Activated CD4-positive, alpha-beta memory T cell treated with anti-CD3 and anti-CD28 coated beads for 36 hours (primary cell): ENCODE measurements at regions of chr2 and their contacts with region 1.

Region 1: GRCh38 chr2:218568190-218569037 is at the starts of genes CNOT9 and USP37:
- DNase-seq: peak; percentile 100
- H3K4me3 Mint-ChIP-seq: peak within 1 kb of the TSS; percentile 96
- H3K27ac Mint-ChIP-seq: peak within 1 kb of the TSS; percentile 100
- H3K4me1 Mint-ChIP-seq: peaks cover 54% of the 10 kb centered on the region
- H3K27me3 Mint-ChIP-seq: no peaks in the 10 kb centered on the region
- total RNA-seq, gene CNOT9: 84.7 to 87.3 TPM
- total RNA-seq, gene USP37: 27.2 to 28.7 TPM

Region 2: DNA sequence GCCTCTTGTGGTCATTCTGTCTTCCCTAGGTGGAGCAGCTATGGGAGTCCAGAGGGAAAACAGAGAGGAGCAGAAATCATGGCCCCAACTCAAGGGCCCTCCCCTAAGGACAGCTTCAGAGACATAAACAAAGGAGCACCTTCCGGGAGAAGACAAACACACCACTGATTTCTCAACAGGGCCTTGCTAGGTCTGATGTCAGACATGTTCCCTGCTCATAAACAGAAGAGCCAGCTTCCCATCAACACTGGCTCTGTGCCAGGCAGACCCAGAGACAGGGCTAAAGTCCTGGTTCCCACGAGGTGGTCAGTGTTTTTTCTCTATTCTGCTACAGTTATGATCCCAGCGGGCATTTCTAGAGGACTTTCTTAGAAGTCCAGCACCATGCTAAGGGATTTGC is 423.3 kb before region 1 on chr2:
- CTCF ChIA-PET with region 1: no interaction called
- POLR2A ChIA-PET with region 1: no interaction called
- intact Hi-C with region 1: no loop called
- DNase-seq: no peak
- H3K4me3 Mint-ChIP-seq: no peak overlapping the region
- H3K27ac Mint-ChIP-seq: no peak overlapping the region
- H3K4me1 Mint-ChIP-seq: no peaks in the 10 kb centered on the region
- H3K27me3 Mint-ChIP-seq: peaks cover 2% of the 10 kb centered on the region

Region 3: DNA sequence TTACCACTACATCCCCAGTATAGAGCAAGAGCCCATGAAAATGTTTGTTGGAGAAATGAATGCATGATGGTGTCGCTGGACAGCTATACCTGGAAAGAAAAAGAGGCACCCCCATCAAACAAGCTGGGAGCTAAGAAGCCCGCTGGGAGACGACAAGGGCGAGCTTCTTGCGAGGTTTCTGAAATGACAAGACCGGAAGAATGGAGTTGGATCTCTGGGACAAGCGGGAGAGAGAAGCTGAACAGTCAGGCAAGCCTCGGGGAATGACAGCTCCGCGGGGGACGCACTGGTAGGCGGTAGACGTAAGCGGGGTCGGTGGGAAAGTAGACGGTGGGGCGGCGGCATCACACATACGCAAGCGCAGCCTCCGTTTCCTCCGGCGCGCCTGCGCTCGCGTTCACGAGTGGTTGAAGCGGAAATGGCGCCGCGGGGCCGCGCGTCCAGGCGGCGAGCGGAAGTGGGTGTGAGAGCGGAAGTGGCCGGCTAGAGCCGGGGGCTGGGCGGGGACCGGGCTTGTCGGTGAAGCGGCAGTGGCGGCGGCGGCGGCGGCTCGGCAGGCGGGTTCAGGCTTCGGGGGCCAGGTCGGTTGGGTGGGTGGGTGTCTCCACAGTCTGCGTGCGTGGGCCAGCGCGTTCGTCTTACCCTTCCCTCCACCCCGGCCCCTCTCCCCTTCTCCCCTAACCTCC is 351.6 kb before region 1 on chr2 and contains the start of gene ARPC2:
- CTCF ChIA-PET with region 1: no interaction called
- POLR2A ChIA-PET with region 1: no interaction called
- intact Hi-C with region 1: loop called (anchors 1 kb)
- DNase-seq: peak; percentile 97
- H3K4me3 Mint-ChIP-seq: peak within 1 kb of the TSS; percentile 83
- H3K27ac Mint-ChIP-seq: peak within 1 kb of the TSS; percentile 91
- H3K4me1 Mint-ChIP-seq: peaks cover 34% of the 10 kb centered on the region
- H3K27me3 Mint-ChIP-seq: no peaks in the 10 kb centered on the region
- total RNA-seq, gene ARPC2: 564 to 570 TPM

Region 4: GRCh38 chr2:218286570-218287459 is 281.6 kb before region 1 on chr2:
- CTCF ChIA-PET with region 1: no interaction called
- POLR2A ChIA-PET with region 1: no interaction called
- intact Hi-C with region 1: loop called (anchors 2 kb)
- DNase-seq: peak; percentile 92
- H3K4me3 Mint-ChIP-seq: peak overlapping the region; percentile 82
- H3K27ac Mint-ChIP-seq: peak overlapping the region; percentile 98
- H3K4me1 Mint-ChIP-seq: peaks cover 81% of the 10 kb centered on the region
- H3K27me3 Mint-ChIP-seq: no peaks in the 10 kb centered on the region

Region 5: DNA sequence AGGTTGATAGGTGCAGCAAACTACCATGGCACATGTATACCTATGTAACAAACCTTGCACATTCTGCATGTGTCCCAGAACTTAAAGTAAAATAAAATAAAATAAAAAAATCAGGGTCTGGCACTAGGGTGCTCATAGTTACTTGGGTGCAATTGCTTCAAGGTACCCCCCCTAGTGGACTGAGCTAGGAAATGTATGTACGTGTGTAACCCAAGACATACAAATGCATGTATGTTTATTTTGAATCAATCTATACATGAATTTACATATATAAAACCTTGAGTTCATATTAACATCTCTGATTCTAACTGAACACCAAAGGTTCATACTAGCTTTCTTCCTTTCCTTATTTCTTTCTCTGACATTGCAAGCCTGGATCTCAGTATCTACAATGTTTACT is 51.8 kb before region 1 on chr2:
- CTCF ChIA-PET with region 1: interaction called, 3 read pairs
- POLR2A ChIA-PET with region 1: no interaction called
- intact Hi-C with region 1: loop called (anchors 1 kb)
- DNase-seq: no peak
- H3K4me3 Mint-ChIP-seq: no peak overlapping the region
- H3K27ac Mint-ChIP-seq: no peak overlapping the region
- H3K4me1 Mint-ChIP-seq: peaks cover 31% of the 10 kb centered on the region
- H3K27me3 Mint-ChIP-seq: no peaks in the 10 kb centered on the region

Region 6: DNA sequence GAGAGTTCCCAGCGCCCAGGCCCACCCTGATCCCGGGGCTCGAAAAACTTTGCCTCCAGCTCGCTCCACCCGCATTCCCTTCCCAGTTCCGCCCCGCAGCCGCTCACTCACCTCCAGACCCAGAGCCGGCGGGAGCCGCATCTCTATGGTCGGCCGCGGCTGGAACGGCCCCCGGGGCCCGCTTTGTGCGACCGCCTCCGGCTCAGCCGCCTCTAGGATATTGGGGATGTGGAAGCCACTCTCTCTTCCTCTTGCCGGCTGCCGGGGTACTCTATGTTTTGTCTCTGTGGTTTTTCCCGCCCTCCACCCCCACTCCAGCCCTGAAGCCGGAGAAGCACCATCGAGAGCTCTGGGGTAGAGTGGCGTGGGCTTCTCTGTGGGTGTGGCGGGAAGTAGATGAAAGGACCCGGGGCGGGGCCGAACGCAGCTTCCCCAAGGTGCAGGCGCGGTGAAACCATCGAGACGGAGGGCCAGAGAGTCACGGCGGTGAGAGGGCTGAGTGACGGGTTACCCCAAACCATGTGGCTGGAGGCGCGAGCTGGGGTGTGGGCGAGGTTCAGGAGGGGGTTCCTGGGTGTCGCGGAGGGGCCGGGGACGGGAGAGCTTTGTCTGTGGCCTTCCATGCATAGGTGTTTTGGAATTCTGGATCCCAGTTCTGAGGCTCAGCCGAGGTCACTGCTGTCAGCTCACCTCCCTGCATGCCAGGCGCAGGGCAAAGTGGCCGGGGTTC is 91.0 kb after region 1 on chr2 and contains the starts of genes BCS1L and ZNF142:
- CTCF ChIA-PET with region 1: interaction called, 3 read pairs
- POLR2A ChIA-PET with region 1: interaction called, 3 read pairs
- intact Hi-C with region 1: loop called (anchors 1 kb)
- DNase-seq: peak; percentile 98
- H3K4me3 Mint-ChIP-seq: peak within 1 kb of the TSS; percentile 93
- H3K27ac Mint-ChIP-seq: peak within 1 kb of the TSS; percentile 80
- H3K4me1 Mint-ChIP-seq: peaks cover 26% of the 10 kb centered on the region
- H3K27me3 Mint-ChIP-seq: no peaks in the 10 kb centered on the region
- total RNA-seq, gene BCS1L: 57.1 to 64.5 TPM
- total RNA-seq, gene ZNF142: 33.7 to 34.8 TPM

Region 7: DNA sequence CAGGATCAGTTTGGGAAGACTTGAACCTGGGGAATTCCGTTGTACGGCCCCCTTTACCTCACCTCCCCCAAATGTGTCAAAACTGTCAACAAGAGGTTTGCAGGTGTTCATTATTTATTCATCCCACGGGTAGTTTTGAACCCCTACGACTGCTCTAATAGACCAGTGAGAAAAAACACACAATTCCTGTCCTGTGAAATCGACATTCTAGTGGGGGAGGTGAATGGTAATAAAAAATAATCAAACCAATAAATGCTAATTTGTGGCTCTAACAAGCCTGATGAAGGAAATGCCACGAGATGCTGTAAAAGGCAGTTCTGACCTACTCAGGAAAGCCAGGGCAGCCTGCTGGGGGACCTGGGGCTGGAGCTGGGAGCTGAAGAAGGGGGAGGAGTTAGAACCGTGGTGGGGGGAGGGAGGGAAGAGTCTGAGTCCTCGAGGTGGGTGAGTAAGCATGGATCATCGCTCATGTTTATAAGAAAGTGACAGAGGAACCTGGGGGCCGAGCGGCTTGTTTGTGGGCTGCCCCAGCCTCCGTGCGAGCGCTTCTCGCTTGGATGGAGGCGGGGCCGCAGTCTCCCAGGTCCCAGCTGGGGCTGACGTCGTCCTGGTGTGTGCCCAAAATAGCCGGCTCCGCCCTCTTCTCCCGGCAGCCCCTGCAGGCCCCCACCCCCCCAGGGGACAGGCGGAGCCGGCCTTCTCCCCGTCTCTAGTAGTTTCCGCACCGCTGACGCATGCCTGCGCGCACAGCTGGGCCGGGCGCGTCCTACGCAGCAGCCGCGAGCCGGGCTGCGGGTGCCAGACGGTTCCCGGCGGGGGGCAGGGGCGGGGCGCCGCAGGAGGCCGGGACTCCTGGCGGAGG is 710.5 kb after region 1 on chr2 and contains the start of gene DNAJB2:
- CTCF ChIA-PET with region 1: no interaction called
- POLR2A ChIA-PET with region 1: no interaction called
- intact Hi-C with region 1: loop called (anchors 1 kb)
- DNase-seq: peak; percentile 100
- H3K4me3 Mint-ChIP-seq: peak within 1 kb of the TSS; percentile 80
- H3K27ac Mint-ChIP-seq: peak within 1 kb of the TSS; percentile 95
- H3K4me1 Mint-ChIP-seq: peaks cover 43% of the 10 kb centered on the region
- H3K27me3 Mint-ChIP-seq: no peaks in the 10 kb centered on the region
- total RNA-seq, gene DNAJB2: 37.3 to 39.1 TPM